CD8-positive, alpha-beta T cell (primary cell): ENCODE measurements at regions of chr11 and their contacts with region 1.

Region 1: GRCh38 chr11:121534131-121535093 is 81.6 kb upstream of the SORL1-AS1 start:
- DNase-seq: peak in 1 of 9 experiments; percentile 19
- ATAC-seq: no peak
- H3K4me3 ChIP-seq: no peak overlapping the region
- H3K4me3 Mint-ChIP-seq: no peak overlapping the region
- H3K27ac ChIP-seq: no peak overlapping the region
- H3K27ac Mint-ChIP-seq: peak overlapping the region; percentile 84
- H3K4me1 ChIP-seq: peaks cover 11% of the 10 kb centered on the region
- H3K4me1 Mint-ChIP-seq: peaks cover 59% of the 10 kb centered on the region
- H3K27me3 ChIP-seq: no peaks in the 10 kb centered on the region
- H3K27me3 Mint-ChIP-seq: no peaks in the 10 kb centered on the region
- CTCF ChIP-seq: no peak

Region 2: GRCh38 chr11:121318848-121319834 is 215.3 kb before region 1 on chr11:
- CTCF ChIA-PET with region 1: no interaction called
- POLR2A ChIA-PET with region 1: no interaction called
- intact Hi-C with region 1: loop called in 1 of 2 experiments (anchors 5 kb)
- DNase-seq: peak in 4 of 9 experiments; percentile 23 to 70 (median 44)
- ATAC-seq: peak; percentile 81
- H3K4me3 ChIP-seq: no peak overlapping the region
- H3K4me3 Mint-ChIP-seq: no peak overlapping the region
- H3K27ac ChIP-seq: no peak overlapping the region
- H3K27ac Mint-ChIP-seq: no peak overlapping the region
- H3K4me1 ChIP-seq: peaks cover 10% of the 10 kb centered on the region
- H3K4me1 Mint-ChIP-seq: peaks cover 19% of the 10 kb centered on the region
- H3K27me3 ChIP-seq: no peaks in the 10 kb centered on the region
- H3K27me3 Mint-ChIP-seq: peaks cover 2% of the 10 kb centered on the region
- CTCF ChIP-seq: peak; percentile 72

Region 3: DNA sequence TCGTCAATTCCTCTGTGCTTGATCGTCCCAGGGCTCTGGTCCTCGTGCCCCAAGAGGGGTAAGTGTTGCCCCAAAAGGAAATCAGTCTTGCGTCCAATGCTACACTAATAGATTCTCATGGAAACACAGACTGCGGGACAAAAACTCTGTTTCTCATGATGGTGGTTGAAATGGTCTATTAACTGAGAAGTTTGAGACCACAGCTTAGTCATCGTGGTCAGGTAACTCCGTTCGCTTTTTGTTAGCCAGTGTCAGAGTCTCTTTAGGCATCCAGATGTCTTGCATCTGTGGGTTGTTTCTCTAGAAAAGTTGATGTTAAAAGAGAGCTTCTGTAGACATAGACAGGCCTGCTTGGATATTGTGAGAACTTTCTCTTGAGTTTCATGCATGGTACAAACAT is 22.9 kb after region 1 on chr11:
- CTCF ChIA-PET with region 1: no interaction called
- POLR2A ChIA-PET with region 1: no interaction called
- intact Hi-C with region 1: loop called in 1 of 2 experiments (anchors 2 kb)
- DNase-seq: peak in 1 of 9 experiments; percentile 13
- ATAC-seq: no peak
- H3K4me3 ChIP-seq: no peak overlapping the region
- H3K4me3 Mint-ChIP-seq: no peak overlapping the region
- H3K27ac ChIP-seq: peak overlapping the region in 1 of 2 experiments; percentile 23
- H3K27ac Mint-ChIP-seq: peak overlapping the region; percentile 15
- H3K4me1 ChIP-seq: no peaks in the 10 kb centered on the region
- H3K4me1 Mint-ChIP-seq: peaks cover 21% of the 10 kb centered on the region
- H3K27me3 ChIP-seq: no peaks in the 10 kb centered on the region
- H3K27me3 Mint-ChIP-seq: no peaks in the 10 kb centered on the region
- CTCF ChIP-seq: no peak